ENCODE measurements at regions of chrX and their contacts with region 1.

Region 1: GRCh38 chrX:4547213-4547836 is 833.9 kb upstream of the PRKX start:
- DNase-seq: peak; percentile 22
- ATAC-seq: no peak
- H3K4me3 ChIP-seq: no peak overlapping the region
- H3K27ac ChIP-seq: no peak overlapping the region
- H3K4me1 ChIP-seq: no peaks in the 10 kb centered on the region
- H3K27me3 ChIP-seq: no peaks in the 10 kb centered on the region
- CTCF ChIP-seq: peak; percentile 77

Region 2: GRCh38 chrX:5113128-5113527 is 565.8 kb after region 1 on chrX:
- CTCF ChIA-PET with region 1: no interaction called
- POLR2A ChIA-PET with region 1: no interaction called
- in situ Hi-C with region 1: no loop called
- intact Hi-C with region 1: loop called (anchors 2 kb)
- DNase-seq: no peak
- ATAC-seq: no peak
- H3K4me3 ChIP-seq: no peak overlapping the region
- H3K27ac ChIP-seq: no peak overlapping the region
- H3K4me1 ChIP-seq: no peaks in the 10 kb centered on the region
- H3K27me3 ChIP-seq: no peaks in the 10 kb centered on the region
- CTCF ChIP-seq: peak; percentile 53; the same call in 1 of the 2 replicates

Measured in Panc1 (cell line).